ENCODE measurements at regions of chr19 and their contacts with region 1.

Region 1: DNA sequence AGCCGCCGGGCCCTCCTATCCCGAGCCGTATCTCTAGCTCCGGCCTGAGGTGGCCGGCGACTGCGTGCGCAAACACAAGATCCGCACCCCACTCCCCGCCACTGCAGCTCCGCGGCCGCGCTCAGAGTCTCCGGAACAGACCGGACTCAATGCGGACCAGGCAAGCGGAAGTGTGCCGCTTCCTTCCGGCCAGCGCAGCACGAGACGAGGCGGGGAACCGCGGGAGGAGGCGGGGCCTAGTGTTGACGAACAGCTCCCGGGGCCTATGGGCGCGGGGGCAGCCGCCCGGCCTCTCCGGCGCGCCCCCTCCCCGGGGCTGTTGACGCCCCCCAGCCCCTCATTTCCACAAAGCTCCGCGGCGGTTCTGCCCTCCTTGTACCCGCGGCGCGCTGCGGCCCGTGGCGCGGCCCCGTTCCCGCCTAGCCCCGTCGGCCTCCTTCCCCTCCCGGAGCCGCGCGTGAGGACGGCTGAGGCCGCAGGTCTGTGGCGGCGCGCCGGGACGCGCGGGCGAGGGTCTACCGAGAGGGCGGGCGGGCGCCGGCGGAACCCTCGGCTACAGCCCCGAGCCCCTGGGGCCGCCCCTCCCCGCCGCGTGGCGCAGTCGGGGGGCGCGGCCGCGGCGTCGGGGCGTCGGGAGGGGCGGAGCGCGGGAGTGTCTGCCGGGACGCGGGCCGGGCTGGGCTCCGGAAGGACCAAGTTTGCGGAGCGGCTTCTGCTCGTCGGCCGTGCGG is at the start of gene DPY19L3:
- DNase-seq: peak; percentile 93 to 97 (median 94)
- H3K4me3 ChIP-seq: peak within 1 kb of the TSS; percentile 96
- H3K27ac ChIP-seq: peak within 1 kb of the TSS; percentile 91 to 97
- H3K4me1 ChIP-seq: peaks cover 3% of the 10 kb centered on the region
- H3K27me3 ChIP-seq: no peaks in the 10 kb centered on the region
- CTCF ChIP-seq: peak in 1 of 3 donors; percentile 13
- EP300 ChIP-seq: no peak
- POLR2A ChIP-seq: peak; percentile 94
- total RNA-seq, gene DPY19L3: 25.3 to 49.8 (median 44.4) TPM

Region 2: DNA sequence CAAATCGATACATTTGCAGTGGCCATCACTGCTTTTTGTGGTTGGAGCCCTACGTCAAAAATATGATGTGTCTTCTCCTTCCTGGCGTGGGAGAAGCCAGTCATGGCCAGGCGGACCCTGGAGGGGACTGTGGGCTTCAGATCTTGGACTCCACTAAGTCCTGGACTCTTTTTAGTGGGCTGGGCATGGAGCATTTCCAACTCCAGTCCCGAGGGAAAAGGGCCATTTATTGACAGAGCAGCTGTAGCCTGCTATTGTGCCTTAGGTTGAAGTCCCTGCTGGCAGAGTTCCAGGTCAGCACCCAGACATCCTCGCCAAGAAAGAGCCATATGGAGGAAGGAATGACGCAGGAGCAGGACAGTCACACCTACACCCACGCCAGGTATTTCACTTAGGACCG is 239.4 kb before region 1 on chr19:
- intact Hi-C with region 1: no loop called
- DNase-seq: no peak
- H3K4me3 ChIP-seq: no peak overlapping the region
- H3K27ac ChIP-seq: no peak overlapping the region
- H3K4me1 ChIP-seq: no peaks in the 10 kb centered on the region
- H3K27me3 ChIP-seq: no peaks in the 10 kb centered on the region
- CTCF ChIP-seq: no peak
- EP300 ChIP-seq: no peak
- POLR2A ChIP-seq: no peak

Region 3: DNA sequence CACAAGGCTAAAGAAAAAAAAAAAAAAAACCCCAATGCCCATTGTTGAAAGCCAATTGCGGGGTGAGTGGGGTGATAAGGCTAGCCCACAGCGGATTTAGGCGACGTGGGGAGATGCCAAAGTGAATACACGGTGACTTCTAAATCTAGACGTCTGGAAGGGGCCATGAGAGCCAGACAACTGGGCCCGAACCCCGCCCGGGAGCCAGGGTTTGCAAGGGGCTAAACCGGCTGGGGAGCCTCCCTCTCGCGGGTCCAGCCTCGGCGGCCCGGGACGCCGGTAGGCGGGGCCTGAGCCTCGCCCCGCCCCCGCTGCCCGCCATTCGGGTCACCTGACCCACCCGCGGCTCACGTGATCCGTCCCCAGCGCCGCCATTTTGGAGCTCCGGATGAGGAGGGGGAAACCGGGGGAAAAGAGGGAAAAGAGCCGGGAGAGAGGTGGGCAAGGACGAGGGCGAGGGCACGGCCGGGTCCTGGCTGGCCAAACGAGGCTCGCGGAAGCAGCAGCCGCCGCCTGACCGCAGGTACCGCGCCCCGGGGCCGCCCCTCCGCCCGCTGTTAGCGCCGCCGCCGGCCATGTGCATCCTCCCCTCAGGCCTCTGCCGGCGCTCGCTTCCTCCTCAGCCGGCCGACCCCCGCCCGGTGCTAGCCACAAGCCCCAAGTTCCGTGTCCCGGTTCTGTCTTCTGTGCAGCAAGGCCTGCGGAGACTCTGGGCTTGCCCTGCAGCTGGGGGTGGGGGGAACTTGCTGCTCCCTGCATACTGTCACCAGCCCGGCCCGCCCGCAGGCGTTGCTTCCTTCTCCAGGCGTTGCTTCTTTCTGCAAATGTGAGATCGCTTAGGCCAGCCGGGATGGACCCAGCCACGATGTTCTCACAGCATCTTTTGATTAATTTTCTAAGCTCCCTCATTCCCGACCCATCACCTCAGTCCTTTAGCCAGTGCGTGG is 60.1 kb before region 1 on chr19 and contains the start of gene ZNF507:
- intact Hi-C with region 1: loop called in 1 of 4 experiments (anchors 5 kb)
- DNase-seq: peak; percentile 78 to 91 (median 87)
- H3K4me3 ChIP-seq: peak within 1 kb of the TSS; percentile 92
- H3K27ac ChIP-seq: peak within 1 kb of the TSS in 1 of 2 donors; percentile 52
- H3K4me1 ChIP-seq: peaks cover 3% of the 10 kb centered on the region
- H3K27me3 ChIP-seq: no peaks in the 10 kb centered on the region
- CTCF ChIP-seq: peak in 1 of 3 donors; percentile 9
- EP300 ChIP-seq: no peak
- POLR2A ChIP-seq: no peak
- total RNA-seq, gene ZNF507: 13.2 to 30.5 (median 25.4) TPM